ENCODE measurements at regions of chr7 and their contacts with region 1.

Region 1: GRCh38 chr7:64887756-64888508 is 15.1 kb upstream of the ZNF273 start:
- DNase-seq: peak; percentile 64
- H3K4me3 Mint-ChIP-seq: peak overlapping the region; percentile 77
- H3K27ac Mint-ChIP-seq: no peak overlapping the region
- H3K4me1 Mint-ChIP-seq: peaks cover 12% of the 10 kb centered on the region
- H3K27me3 Mint-ChIP-seq: peaks cover 55% of the 10 kb centered on the region

Region 2: GRCh38 chr7:64630496-64630895 is 257.4 kb before region 1 on chr7:
- CTCF ChIA-PET with region 1: no interaction called
- POLR2A ChIA-PET with region 1: no interaction called
- intact Hi-C with region 1: loop called (anchors 10 kb)
- DNase-seq: no peak
- H3K4me3 Mint-ChIP-seq: no peak overlapping the region
- H3K27ac Mint-ChIP-seq: no peak overlapping the region
- H3K4me1 Mint-ChIP-seq: peaks cover 3% of the 10 kb centered on the region
- H3K27me3 Mint-ChIP-seq: no peaks in the 10 kb centered on the region

Region 3: DNA sequence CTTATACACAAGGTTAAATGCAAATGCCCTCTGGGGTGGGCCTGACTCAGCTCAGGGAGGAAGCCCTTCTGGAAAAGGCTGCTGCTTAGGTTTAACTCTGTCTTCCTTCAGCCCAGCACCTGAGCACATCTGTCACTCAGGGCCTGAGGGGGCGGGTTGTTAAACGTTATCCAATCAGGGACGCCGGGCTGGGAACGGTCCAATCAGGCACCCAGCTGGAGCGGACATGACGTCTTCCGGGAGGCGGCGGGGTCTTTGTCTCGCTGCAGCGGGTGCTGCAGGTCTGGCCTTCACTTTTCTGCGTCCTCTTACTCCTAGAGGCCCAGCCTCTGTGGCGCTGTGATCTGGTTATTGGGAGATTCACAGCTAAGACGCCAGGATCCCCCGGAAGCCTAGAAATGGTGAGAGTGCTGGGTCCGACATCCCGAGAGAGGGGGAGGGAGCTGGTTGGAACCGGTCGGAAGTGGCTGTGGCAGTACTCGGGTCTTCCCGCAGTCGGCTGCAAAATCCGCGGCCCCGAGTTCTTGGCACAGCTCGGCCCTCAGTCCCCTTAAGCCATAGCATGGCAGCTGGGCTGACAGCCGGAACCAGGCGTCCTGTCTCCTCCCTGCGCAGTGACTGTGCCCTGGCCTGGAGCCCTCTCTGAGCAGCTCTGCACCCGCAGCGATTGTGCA is 93.6 kb before region 1 on chr7 and contains the start of gene ZNF138:
- CTCF ChIA-PET with region 1: no interaction called
- POLR2A ChIA-PET with region 1: interaction called, 3 read pairs
- intact Hi-C with region 1: loop called (anchors 5 kb)
- DNase-seq: peak; percentile 97
- H3K4me3 Mint-ChIP-seq: peak within 1 kb of the TSS; percentile 99
- H3K27ac Mint-ChIP-seq: peak within 1 kb of the TSS; percentile 97
- H3K4me1 Mint-ChIP-seq: peaks cover 18% of the 10 kb centered on the region
- H3K27me3 Mint-ChIP-seq: no peaks in the 10 kb centered on the region
- total RNA-seq, gene ZNF138: 10.3 to 10.5 TPM

Region 4: DNA sequence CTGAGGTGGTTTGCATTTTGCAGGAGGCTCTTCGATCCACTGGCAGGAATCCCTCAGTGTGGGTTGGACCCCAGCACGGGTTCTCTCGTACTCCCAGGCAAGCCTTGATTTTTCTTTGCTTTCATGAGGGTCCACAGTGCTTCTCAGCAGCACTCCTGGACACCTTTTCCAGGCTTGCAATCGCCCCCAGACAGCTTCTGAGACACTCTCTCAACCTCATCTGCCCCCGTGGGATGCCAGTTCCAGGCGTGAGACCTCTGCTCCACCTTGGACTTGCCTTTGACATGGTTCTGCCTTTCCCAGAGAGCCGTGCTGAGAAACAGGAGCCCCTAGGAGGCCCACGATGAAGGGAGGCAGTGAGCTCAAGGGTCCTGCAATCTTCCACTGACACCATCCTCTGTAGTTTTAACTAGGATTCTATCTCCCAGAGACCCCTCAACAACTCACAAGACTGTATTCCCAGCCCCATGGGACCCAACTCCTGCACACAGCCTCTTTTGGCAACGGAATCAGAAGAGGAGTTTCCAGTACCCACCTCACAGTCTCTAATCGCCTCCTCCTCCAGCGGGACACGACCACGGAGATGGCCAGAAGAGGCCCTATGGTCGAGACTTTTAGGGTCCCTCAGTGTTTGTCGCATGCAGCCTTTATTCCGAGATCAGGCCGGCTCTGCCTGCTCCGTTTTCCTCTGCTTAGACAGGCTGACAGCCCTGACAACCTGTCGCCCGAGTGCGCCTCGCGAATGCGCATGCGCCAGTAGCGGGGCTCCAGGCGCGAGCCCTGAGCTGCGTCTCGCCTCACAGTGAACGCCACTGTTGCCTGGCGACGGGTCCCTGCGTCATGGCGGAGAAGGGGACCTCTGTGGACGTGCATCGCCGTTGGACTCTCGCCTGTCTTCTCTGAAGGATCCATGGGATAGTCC is 10.9 kb before region 1 on chr7:
- CTCF ChIA-PET with region 1: no interaction called
- POLR2A ChIA-PET with region 1: no interaction called
- intact Hi-C with region 1: no loop called
- DNase-seq: peak; percentile 70
- H3K4me3 Mint-ChIP-seq: peak overlapping the region; percentile 61
- H3K27ac Mint-ChIP-seq: no peak overlapping the region
- H3K4me1 Mint-ChIP-seq: peaks cover 10% of the 10 kb centered on the region
- H3K27me3 Mint-ChIP-seq: peaks cover 21% of the 10 kb centered on the region

Region 5: GRCh38 chr7:64951250-64951848 is 63.4 kb after region 1 on chr7:
- CTCF ChIA-PET with region 1: interaction called, 3 read pairs
- POLR2A ChIA-PET with region 1: no interaction called
- intact Hi-C with region 1: loop called (anchors 2 kb)
- DNase-seq: no peak
- H3K4me3 Mint-ChIP-seq: no peak overlapping the region
- H3K27ac Mint-ChIP-seq: no peak overlapping the region
- H3K4me1 Mint-ChIP-seq: no peaks in the 10 kb centered on the region
- H3K27me3 Mint-ChIP-seq: peaks cover 23% of the 10 kb centered on the region

Measured in activated CD4-positive, alpha-beta memory T cell treated with anti-CD3 and anti-CD28 coated beads for 36 hours (primary cell).